B cell (primary cell): ENCODE measurements at regions of chr12 and their contacts with region 1.

Region 1: DNA sequence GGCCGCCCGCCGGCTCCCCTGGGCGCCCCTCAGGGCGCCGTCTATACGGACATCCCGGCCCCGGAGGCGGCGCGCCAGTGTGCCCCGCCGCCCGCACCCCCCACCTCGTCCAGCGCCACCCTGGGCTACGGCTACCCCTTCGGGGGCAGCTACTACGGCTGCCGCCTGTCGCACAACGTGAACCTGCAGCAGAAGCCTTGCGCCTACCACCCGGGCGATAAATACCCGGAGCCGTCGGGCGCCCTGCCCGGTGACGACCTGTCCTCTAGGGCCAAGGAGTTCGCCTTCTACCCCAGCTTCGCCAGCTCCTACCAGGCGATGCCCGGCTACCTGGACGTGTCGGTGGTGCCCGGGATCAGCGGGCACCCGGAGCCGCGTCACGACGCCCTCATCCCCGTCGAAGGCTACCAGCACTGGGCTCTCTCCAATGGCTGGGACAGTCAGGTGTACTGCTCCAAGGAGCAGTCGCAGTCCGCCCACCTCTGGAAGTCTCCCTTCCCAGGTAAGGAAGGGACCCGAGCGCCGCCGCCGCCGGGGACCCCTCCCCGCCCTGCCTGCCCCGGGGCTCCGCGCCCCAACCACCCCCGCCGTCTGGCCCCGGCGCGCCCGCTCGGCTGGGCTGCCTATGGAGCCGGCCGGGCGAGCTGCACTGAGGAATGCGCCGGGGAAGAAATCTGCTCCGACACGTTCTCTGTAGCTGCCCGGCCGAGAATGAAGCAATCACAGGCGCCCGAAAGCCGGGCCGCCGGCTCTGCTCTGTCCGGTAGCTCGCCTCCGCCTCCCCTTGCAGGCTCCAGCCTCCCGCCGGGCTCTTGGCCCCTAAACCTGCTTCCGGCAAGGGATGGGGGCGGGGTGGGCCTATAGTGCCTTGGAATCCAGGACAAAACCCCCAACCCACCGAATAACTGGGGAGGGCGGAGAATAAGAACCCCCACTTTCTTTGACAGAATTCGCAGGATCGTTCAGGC is 794 bp downstream of the HOXC13 start:
- DNase-seq: peak; percentile 39
- ATAC-seq: no peak
- H3K4me3 ChIP-seq: no peak overlapping the region
- H3K4me3 Mint-ChIP-seq: no peak overlapping the region
- H3K27ac ChIP-seq: no peak overlapping the region
- H3K27ac Mint-ChIP-seq: no peak overlapping the region
- H3K4me1 ChIP-seq: peaks cover 10 to 25% of the 10 kb centered on the region in 2 donors
- H3K4me1 Mint-ChIP-seq: peaks cover 10% of the 10 kb centered on the region
- H3K27me3 ChIP-seq: peaks cover 0 to 84% (median 74%) of the 10 kb centered on the region in 4 experiments
- H3K27me3 Mint-ChIP-seq: peaks cover 77% of the 10 kb centered on the region
- CTCF ChIP-seq: no peak

Region 2: DNA sequence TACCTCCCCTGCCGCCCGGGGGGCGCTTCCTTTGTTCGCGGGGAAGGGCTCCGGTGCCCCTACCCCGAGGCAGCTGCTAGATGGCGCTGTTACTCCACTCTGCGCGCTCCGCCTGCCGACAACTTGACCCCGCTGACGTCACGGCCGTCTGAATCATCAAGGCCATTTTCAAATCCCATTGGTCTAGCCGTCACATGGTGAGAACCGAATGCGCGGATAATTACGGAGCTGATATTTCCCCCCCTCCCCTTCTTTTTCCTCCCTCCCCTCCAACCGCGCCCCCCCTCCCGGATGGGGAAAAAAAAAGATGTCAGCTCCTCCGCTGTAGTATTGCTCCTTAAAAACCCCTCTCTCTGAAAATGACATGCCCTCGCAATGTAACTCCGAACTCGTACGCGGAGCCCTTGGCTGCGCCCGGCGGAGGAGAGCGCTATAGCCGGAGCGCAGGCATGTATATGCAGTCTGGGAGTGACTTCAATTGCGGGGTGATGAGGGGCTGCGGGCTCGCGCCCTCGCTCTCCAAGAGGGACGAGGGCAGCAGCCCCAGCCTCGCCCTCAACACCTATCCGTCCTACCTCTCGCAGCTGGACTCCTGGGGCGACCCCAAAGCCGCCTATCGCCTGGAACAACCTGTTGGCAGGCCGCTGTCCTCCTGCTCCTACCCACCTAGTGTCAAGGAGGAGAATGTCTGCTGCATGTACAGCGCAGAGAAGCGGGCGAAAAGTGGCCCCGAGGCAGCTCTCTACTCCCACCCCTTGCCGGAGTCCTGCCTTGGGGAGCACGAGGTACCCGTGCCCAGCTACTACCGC is 45.7 kb after region 1 on chr12 and contains the start of gene HOXC10:
- CTCF ChIA-PET with region 1: no interaction called
- POLR2A ChIA-PET with region 1: no interaction called
- intact Hi-C with region 1: loop called (anchors 5 kb)
- DNase-seq: peak; percentile 48
- ATAC-seq: no peak
- H3K4me3 ChIP-seq: no peak within 1 kb of the TSS
- H3K4me3 Mint-ChIP-seq: peak within 1 kb of the TSS; percentile 47
- H3K27ac ChIP-seq: no peak within 1 kb of the TSS
- H3K27ac Mint-ChIP-seq: peak within 1 kb of the TSS; percentile 74
- H3K4me1 ChIP-seq: peaks cover 30 to 44% of the 10 kb centered on the region in 2 donors
- H3K4me1 Mint-ChIP-seq: peaks cover 23% of the 10 kb centered on the region
- H3K27me3 ChIP-seq: peaks cover 0 to 97% (median 93%) of the 10 kb centered on the region in 4 experiments
- H3K27me3 Mint-ChIP-seq: peaks cover 87% of the 10 kb centered on the region
- CTCF ChIP-seq: peak; percentile 24
- total RNA-seq, gene HOXC10: not detected in 2 replicates